ENCODE measurements at regions of chr22 and their contacts with region 1.

Region 1: GRCh38 chr22:19854778-19855503 is at the starts of genes GNB1L and RTL10:
- DNase-seq: peak; percentile 97
- H3K4me3 Mint-ChIP-seq: peak within 1 kb of the TSS; percentile 98
- H3K27ac Mint-ChIP-seq: peak within 1 kb of the TSS; percentile 91
- H3K4me1 Mint-ChIP-seq: peaks cover 40% of the 10 kb centered on the region
- H3K27me3 Mint-ChIP-seq: no peaks in the 10 kb centered on the region
- total RNA-seq, gene GNB1L: 20.6 and 21.5 TPM in 2 replicates
- total RNA-seq, gene RTL10: 22.2 and 24.1 TPM in 2 replicates

Region 2: GRCh38 chr22:19447388-19448075 is 407.4 kb before region 1 on chr22 and contains the start of gene C22orf39:
- intact Hi-C with region 1: loop called (anchors 10 kb)
- DNase-seq: peak; percentile 88
- H3K4me3 Mint-ChIP-seq: peak within 1 kb of the TSS; percentile 95
- H3K27ac Mint-ChIP-seq: peak within 1 kb of the TSS; percentile 94
- H3K4me1 Mint-ChIP-seq: peaks cover 46% of the 10 kb centered on the region
- H3K27me3 Mint-ChIP-seq: no peaks in the 10 kb centered on the region
- total RNA-seq, gene C22orf39: 22.8 and 26.8 TPM in 2 replicates

Region 3: GRCh38 chr22:19756288-19757128 is 98.4 kb before region 1 on chr22:
- intact Hi-C with region 1: no loop called
- DNase-seq: peak; percentile 61
- H3K4me3 Mint-ChIP-seq: peak overlapping the region; percentile 2
- H3K27ac Mint-ChIP-seq: no peak overlapping the region
- H3K4me1 Mint-ChIP-seq: peaks cover 17% of the 10 kb centered on the region
- H3K27me3 Mint-ChIP-seq: peaks cover 56% of the 10 kb centered on the region

Region 4: DNA sequence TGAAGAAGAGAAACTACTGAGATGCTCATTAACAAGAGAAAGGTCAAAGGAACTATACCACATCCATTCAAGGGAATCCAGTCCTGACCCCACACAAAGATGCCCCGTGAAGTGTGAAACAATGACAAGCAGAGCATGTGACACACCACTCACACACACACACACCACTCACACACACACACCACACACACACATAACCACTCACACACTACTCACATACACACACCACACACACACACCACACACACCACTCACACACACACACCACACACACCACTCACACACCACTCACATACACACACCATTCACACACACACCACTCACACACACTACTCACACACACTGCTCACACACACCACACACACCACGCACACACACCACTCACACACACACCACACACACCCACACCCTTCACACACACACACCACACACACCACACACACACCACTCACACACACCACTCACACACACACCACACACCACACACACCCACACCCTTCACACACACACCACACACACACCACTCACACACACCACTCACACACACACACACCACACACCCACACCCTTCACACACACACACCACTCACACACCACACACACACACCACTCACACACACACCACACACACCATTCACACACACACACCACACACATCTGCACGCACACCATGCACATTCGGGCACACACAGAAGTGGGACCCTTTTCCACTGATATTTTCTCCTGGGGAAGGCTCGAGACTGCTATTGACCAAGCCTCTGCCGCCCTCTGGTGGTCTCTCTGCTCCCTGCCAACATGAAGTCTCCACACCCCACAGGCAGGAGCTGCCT is 54.6 kb after region 1 on chr22:
- intact Hi-C with region 1: loop called (anchors 2 kb)
- DNase-seq: peak; percentile 62
- H3K4me3 Mint-ChIP-seq: no peak overlapping the region
- H3K27ac Mint-ChIP-seq: peak overlapping the region; percentile 20
- H3K4me1 Mint-ChIP-seq: peaks cover 6% of the 10 kb centered on the region
- H3K27me3 Mint-ChIP-seq: no peaks in the 10 kb centered on the region

Region 5: GRCh38 chr22:19941365-19942082 is 86.6 kb after region 1 on chr22 and contains the starts of genes COMT and TXNRD2:
- intact Hi-C with region 1: loop called (anchors 1 kb)
- DNase-seq: peak; percentile 67
- H3K4me3 Mint-ChIP-seq: peak within 1 kb of the TSS; percentile 98
- H3K27ac Mint-ChIP-seq: peak within 1 kb of the TSS; percentile 93
- H3K4me1 Mint-ChIP-seq: peaks cover 27% of the 10 kb centered on the region
- H3K27me3 Mint-ChIP-seq: peaks cover 1% of the 10 kb centered on the region
- total RNA-seq, gene COMT: 99.4 and 112 TPM in 2 replicates
- total RNA-seq, gene TXNRD2: 19.0 and 20.0 TPM in 2 replicates

Region 6: DNA sequence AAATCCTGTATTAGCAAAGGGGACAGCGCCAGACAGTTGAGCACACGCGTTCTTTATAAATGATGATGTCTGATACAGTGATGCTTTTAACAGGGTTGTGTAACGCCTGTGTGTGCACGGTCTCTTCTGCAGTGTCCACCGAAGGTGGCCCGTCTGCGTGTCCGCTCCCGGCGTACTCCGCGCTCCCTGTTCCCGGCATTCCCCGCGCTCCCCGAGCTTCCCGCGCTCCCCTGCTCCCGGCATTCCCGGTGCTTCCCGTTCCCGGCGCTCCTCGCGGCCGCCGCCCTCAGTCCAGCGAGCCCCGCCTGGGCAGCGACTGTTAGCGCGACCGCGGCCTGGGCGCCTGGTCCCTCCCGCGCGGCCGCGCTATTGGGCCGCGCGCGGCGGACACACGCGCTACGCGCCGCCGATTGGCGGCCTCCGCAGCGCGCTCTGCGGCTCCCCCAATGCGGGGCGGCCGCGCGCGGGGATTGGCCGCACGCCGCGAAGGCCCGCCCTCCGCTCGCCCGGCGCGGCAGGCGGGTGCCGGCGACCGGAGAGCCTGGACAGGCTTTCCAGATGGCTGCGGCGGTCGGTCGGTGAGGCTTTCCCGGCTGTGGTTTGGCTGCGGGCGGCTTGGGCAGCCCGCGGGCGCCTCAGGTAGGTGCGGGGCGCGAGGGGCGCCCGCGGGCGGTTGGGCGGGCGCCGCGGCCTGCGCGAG is 225.0 kb after region 1 on chr22 and contains the start of gene DGCR8:
- intact Hi-C with region 1: loop called (anchors 1 kb)
- DNase-seq: peak; percentile 74
- H3K4me3 Mint-ChIP-seq: peak within 1 kb of the TSS; percentile 86
- H3K27ac Mint-ChIP-seq: peak within 1 kb of the TSS; percentile 82
- H3K4me1 Mint-ChIP-seq: peaks cover 40% of the 10 kb centered on the region
- H3K27me3 Mint-ChIP-seq: no peaks in the 10 kb centered on the region
- total RNA-seq, gene DGCR8: 79.3 and 81.0 TPM in 2 replicates

Region 7: GRCh38 chr22:20319745-20320658 is 465.1 kb after region 1 on chr22 and contains the start of gene DGCR6L:
- intact Hi-C with region 1: loop called (anchors 10 kb)
- DNase-seq: peak; percentile 97
- H3K4me3 Mint-ChIP-seq: peak within 1 kb of the TSS; percentile 92
- H3K27ac Mint-ChIP-seq: peak within 1 kb of the TSS; percentile 86
- H3K4me1 Mint-ChIP-seq: peaks cover 62% of the 10 kb centered on the region
- H3K27me3 Mint-ChIP-seq: no peaks in the 10 kb centered on the region
- total RNA-seq, gene DGCR6L: 35.5 and 40.6 TPM in 2 replicates